Activated CD8-positive, alpha-beta T cell treated with anti-CD3 and anti-CD28 coated beads for 36 hours (primary cell): ENCODE measurements at regions of chr5 and their contacts with region 1.

Region 1: GRCh38 chr5:132180134-132180745 is 47.4 kb downstream of the P4HA2 start:
- DNase-seq: peak; percentile 26
- ATAC-seq: peak; percentile 26
- H3K4me3 Mint-ChIP-seq: no peak overlapping the region
- H3K27ac Mint-ChIP-seq: peak overlapping the region; percentile 47
- H3K4me1 Mint-ChIP-seq: peaks cover 36% of the 10 kb centered on the region
- H3K27me3 Mint-ChIP-seq: no peaks in the 10 kb centered on the region
- CTCF ChIP-seq: peak; percentile 75

Region 2: DNA sequence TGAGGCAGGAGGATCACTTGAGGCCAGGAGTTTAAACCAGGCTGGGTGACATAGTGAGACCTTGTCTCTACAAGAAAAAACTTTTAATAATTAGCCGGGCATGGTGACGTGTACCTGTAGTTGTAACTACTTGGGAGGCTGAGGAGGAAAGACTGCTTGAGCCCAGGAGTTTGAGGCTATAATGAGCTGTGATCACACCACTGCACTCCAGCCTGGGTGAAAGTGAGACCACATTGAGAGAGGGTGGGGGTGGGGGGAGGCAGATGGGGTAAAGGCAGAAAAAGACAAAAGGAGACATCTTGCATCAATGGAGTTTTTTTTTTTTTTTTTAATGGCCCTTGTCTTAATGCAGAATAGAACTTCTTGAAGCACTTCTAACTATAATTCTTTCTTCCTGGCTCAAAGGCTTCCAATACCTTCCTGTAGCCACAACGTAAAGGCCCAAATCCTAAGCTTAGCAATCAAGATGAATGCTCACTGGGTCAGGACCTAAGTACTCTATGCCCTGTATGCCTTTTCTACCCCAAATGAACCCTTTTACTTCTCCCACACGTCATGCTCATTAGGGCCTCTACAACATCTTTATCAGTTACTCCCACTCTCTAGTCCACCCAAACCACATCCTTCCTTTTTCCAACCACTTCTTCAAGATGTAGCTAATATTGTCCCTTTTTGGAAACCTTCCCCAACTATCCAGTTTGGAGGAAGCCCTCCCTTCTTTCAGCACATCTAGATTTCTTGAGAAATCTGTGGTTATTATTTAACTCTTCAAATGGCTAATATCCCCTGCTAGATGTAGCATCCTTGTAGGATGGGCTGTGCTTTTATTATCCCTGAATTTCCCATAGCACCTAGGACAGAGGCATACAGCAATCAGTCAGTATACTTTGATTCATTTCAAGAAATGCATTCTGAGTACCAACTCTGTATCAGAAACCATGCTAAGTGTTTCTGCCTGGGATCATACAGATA is 65.8 kb before region 1 on chr5:
- CTCF ChIA-PET with region 1: interaction called, 14 read pairs
- POLR2A ChIA-PET with region 1: no interaction called
- intact Hi-C with region 1: no loop called
- DNase-seq: no peak
- ATAC-seq: peak; percentile 53
- H3K4me3 Mint-ChIP-seq: no peak overlapping the region
- H3K27ac Mint-ChIP-seq: peak overlapping the region; percentile 58
- H3K4me1 Mint-ChIP-seq: peaks cover 65% of the 10 kb centered on the region
- H3K27me3 Mint-ChIP-seq: no peaks in the 10 kb centered on the region
- CTCF ChIP-seq: no peak

Region 3: DNA sequence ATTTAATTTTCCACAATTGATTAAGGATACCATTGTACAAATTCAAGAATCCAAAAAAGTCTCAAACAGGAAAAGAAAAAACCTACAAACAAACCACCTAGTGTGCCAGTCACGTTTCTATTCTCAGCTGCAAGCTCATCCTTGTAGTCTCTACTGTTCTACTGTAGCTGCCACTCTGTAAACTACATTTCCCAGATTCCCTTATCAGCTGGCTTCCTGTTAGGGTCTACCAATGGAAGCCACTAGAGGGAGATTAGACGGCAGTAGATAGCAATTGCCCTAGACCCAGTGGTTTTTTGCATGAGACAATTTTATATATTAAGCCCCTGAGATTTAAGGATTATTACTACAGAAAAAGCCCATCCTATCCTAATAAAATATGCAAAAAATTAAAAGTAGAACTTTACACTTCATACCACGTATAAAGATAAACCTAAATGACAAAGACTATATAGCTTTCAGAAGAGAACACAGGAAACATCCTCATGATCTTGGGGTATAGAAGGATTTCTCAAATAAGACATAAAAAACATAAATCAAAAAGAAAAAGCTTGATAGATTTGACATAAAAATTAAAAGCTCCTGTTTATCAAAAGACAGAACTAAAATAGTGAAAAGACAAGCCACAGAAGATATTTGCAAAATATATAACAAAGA is 10.0 kb after region 1 on chr5:
- CTCF ChIA-PET with region 1: interaction called, 50 read pairs
- POLR2A ChIA-PET with region 1: no interaction called
- intact Hi-C with region 1: no loop called
- DNase-seq: no peak
- ATAC-seq: peak; percentile 99
- H3K4me3 Mint-ChIP-seq: no peak overlapping the region
- H3K27ac Mint-ChIP-seq: no peak overlapping the region
- H3K4me1 Mint-ChIP-seq: peaks cover 3% of the 10 kb centered on the region
- H3K27me3 Mint-ChIP-seq: peaks cover 6% of the 10 kb centered on the region
- CTCF ChIP-seq: peak; percentile 69

Region 4: GRCh38 chr5:132203464-132203818 is 23.2 kb after region 1 on chr5:
- CTCF ChIA-PET with region 1: interaction called, 12 read pairs
- POLR2A ChIA-PET with region 1: no interaction called
- intact Hi-C with region 1: loop called (anchors 2 kb)
- DNase-seq: no peak
- ATAC-seq: no peak
- H3K4me3 Mint-ChIP-seq: no peak overlapping the region
- H3K27ac Mint-ChIP-seq: no peak overlapping the region
- H3K4me1 Mint-ChIP-seq: peaks cover 3% of the 10 kb centered on the region
- H3K27me3 Mint-ChIP-seq: peaks cover 2% of the 10 kb centered on the region
- CTCF ChIP-seq: no peak